ENCODE measurements at regions of chr12 and their contacts with region 1.

Region 1: DNA sequence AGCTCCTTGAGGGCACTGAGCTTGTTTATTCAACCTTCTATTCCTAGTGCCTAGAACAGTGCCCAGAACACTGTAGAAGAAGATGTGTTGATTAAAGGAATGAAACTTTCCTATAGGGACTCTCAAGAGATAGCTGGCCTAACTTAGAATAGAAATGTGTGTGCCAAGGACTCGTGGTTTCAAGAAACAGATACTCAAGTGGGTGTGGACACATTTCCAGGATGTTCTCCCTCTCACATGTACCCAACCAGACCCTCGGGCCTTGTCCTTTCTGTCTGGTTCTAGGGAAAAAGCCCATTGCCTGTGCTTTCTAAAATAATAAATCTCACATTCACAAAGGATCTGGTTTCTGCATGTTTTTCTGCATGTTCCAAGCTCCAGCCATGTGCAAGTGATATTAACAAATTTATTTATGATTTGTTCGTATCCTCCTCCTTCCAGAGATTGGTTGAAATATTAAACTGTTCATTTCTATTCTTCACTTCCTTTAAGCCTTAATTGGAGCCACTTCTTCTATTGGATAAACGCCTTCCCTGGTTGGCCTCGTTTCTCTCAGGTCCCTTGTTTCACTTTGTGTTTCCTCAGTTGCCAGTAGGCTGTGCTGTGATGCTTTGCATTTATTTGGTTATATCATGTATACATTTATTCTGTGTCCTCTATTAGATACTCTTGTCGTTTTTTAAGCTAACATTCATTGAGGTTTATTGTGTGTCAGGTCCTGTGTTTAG is 89.8 kb downstream of the CRADD start:
- DNase-seq: peak; percentile 57
- H3K4me3 Mint-ChIP-seq: peak overlapping the region; percentile 5
- H3K27ac Mint-ChIP-seq: peak overlapping the region; percentile 75
- H3K4me1 Mint-ChIP-seq: peaks cover 42% of the 10 kb centered on the region
- H3K27me3 Mint-ChIP-seq: no peaks in the 10 kb centered on the region

Region 2: GRCh38 chr12:93699271-93700145 is 67.5 kb before region 1 on chr12:
- CTCF ChIA-PET with region 1: no interaction called
- POLR2A ChIA-PET with region 1: no interaction called
- DNase-seq: no peak
- H3K4me3 Mint-ChIP-seq: no peak overlapping the region
- H3K27ac Mint-ChIP-seq: no peak overlapping the region
- H3K4me1 Mint-ChIP-seq: peaks cover 11% of the 10 kb centered on the region
- H3K27me3 Mint-ChIP-seq: no peaks in the 10 kb centered on the region

Region 3: DNA sequence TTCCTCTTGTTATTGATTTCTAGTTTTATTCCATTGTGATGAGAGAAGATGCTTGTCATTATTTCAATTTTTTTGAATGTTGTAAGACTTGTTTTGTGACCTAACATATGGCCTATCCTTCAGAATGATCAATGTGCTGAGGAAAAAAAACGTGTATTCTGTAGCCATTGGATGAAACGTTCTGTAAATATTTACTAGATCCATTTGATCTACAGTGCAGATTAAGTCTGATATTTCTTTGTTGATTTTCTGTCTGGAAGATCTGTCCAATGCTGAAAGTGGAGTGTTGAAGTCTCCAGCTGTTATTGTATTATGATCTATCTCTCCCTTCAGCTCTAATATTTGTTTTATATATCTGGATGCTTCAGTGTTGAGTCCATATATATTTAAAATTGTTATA is 107.8 kb after region 1 on chr12:
- CTCF ChIA-PET with region 1: no interaction called
- POLR2A ChIA-PET with region 1: no interaction called
- DNase-seq: no peak
- H3K4me3 Mint-ChIP-seq: no peak overlapping the region
- H3K27ac Mint-ChIP-seq: no peak overlapping the region
- H3K4me1 Mint-ChIP-seq: peaks cover 4% of the 10 kb centered on the region
- H3K27me3 Mint-ChIP-seq: peaks cover 20% of the 10 kb centered on the region

Region 4: DNA sequence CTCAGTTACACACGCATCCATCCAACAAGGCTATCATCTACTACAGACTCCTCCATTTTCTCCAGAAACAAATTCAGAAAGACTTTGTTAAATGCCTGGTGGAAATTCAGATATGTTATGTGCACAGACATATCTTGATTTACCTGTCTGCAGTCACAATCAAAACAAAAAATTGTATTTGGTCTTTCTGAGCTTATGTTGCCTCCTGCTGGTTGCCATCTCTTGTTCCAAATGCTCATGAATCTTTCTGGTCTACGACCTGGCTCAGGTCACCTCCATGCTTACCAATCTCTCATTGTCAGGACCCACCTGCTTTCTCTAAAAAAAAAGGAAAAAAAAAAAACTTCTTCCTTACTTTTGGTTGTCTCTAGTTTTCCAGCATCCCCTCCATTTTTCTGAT is 212.2 kb after region 1 on chr12:
- CTCF ChIA-PET with region 1: interaction called, 65 read pairs
- POLR2A ChIA-PET with region 1: interaction called, 5 read pairs
- DNase-seq: peak; percentile 37
- H3K4me3 Mint-ChIP-seq: no peak overlapping the region
- H3K27ac Mint-ChIP-seq: no peak overlapping the region
- H3K4me1 Mint-ChIP-seq: peaks cover 30% of the 10 kb centered on the region
- H3K27me3 Mint-ChIP-seq: peaks cover 6% of the 10 kb centered on the region

Region 5: DNA sequence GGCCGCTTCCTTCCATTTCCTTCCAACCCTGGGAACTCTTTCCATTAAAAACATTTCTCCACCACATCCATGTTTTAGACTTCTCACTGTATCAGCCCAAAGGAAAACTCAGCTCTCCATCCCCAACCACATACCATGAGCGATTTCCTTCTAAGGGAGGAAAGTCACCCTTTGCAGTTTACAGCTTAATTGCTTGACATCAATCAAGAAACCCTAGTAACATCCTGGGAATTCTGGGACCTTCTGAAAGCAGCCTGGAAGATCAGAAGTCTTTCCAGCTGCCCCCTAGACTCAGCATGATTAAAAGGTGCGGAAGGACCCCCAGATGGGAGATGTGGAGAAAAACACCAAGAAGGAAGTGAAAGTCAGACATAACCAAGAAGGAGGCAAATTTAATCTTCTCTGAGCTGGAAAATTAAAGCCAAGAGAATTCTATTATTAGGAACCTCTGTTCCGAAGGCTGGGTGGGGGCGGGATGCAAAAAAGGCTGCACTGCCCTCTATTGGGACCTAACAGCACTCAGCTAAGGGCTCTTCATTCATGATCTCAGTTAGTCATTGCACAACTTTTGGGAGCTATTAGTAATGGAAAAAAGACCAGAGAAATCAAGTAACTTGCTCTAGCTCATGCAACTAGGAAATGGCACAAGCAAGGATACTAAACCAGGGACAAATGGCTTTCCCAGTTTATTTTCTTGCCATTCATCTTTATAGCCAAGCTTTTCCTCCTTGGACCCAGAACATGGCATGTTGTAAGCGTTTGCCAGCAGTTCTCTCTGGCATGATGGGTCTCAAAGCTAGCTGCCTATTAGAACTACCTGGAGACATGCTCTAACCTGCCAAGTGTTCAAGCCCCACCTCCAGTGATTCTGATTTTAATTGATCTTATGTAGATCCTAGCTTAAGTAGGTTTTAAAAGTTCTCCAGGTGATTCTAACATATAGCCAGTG is 308.3 kb after region 1 on chr12:
- CTCF ChIA-PET with region 1: interaction called, 10 read pairs
- POLR2A ChIA-PET with region 1: no interaction called
- DNase-seq: no peak
- H3K4me3 Mint-ChIP-seq: no peak overlapping the region
- H3K27ac Mint-ChIP-seq: no peak overlapping the region
- H3K4me1 Mint-ChIP-seq: peaks cover 14% of the 10 kb centered on the region
- H3K27me3 Mint-ChIP-seq: peaks cover 18% of the 10 kb centered on the region

Measured in activated CD4-positive, alpha-beta memory T cell treated with anti-CD3 and anti-CD28 coated beads, Interleukin-2, amount 10 ng/mL, durations not matched to agents 7 days and 5 days (primary cell).